Endothelial cell of umbilical vein (primary cell): ENCODE measurements at regions of chr15 and their contacts with region 1.

Region 1: DNA sequence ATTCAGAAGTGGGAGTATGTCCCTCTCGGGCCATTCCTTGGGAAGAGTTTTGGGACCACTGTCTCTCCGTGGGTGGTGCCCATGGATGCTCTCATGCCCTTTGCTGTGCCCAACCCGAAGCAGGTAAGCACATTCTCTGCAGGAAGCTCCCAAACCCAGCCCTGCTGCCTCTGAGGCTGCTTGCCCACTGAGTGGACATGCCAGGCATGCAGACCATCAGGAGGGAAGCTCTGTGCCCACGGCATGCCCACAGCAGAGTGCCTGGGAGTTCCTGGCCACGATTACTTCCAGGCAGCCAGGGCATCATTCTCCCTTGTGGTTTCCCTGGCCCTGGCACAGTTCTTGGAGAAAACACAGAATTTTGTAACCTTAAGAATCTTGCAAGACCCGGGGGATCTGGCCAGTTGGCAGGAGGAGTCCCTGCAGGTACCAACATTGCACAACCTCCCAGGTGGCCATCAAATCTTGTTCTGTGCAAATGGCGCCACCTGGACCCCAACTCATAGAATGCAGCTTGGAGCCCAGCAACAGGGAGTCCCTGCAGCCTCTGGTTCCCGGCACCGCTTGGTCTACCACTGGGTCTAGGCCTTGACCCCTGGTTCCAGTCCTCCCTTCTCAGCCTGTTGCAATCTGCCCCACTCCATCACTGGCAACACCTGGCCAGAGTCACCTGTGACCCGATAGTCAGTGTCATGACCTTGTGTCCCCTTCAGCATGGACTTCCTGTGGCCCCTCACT is 20.4 kb downstream of the FAH start:
- DNase-seq: peak; percentile 58
- H3K4me3 ChIP-seq: no peak overlapping the region
- H3K27ac ChIP-seq: no peak overlapping the region
- H3K4me1 ChIP-seq: peaks cover 3% of the 10 kb centered on the region
- H3K27me3 ChIP-seq: no peaks in the 10 kb centered on the region
- CTCF ChIP-seq: peak; percentile 75 to 82
- POLR2A ChIP-seq: no peak

Region 2: GRCh38 chr15:79339564-79340314 is 833.5 kb before region 1 on chr15:
- CTCF ChIA-PET with region 1: interaction called, 14 read pairs
- POLR2A ChIA-PET with region 1: no interaction called
- dilution Hi-C with region 1: no loop called
- intact Hi-C with region 1: no loop called
- DNase-seq: peak; percentile 69
- H3K4me3 ChIP-seq: no peak overlapping the region
- H3K27ac ChIP-seq: no peak overlapping the region
- H3K4me1 ChIP-seq: no peaks in the 10 kb centered on the region
- H3K27me3 ChIP-seq: no peaks in the 10 kb centered on the region
- CTCF ChIP-seq: peak; percentile 61 to 71
- POLR2A ChIP-seq: no peak

Region 3: DNA sequence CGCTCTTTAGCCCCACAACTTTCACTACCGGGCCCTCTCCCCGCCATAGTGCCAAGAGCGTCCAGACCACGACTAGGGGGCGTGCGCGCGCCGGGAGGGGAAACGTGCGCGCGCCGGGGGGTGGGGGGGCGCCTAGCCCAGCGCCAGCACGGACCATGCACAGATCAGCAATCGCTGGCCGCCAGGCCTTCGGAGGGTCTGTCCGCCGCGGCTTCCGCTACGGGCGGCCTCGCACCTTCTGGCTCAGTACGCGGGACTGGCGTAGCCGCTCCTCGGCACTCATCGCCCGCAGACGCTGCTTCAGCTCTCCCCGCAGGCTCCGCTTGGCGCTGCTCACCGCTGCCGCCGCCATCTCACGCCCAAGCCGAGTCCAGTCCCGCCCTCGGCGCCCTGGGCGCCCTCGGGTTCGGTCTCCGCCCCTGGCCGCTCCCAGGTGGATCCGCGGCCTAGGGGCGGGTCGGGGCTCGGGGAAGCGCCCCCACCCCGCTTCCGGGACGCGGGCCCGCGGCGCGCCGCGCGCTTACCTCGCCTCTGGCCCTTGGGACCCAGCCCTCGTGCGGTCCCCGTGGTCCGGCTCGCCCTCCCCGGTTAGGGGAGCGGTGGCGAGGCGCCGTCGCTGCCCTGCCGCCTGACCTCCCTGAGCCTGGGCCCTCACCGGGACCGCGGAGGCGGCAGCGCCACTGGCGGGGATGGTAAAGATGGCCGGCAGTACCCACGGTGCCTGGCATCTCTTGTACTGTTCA is 276.4 kb before region 1 on chr15 and contains the start of gene MTHFS:
- CTCF ChIA-PET with region 1: no interaction called
- POLR2A ChIA-PET with region 1: no interaction called
- dilution Hi-C with region 1: no loop called
- intact Hi-C with region 1: loop called (anchors 2 kb)
- DNase-seq: peak; percentile 73
- H3K4me3 ChIP-seq: peak within 1 kb of the TSS in 2 of 3 experiments; percentile 53 to 77
- H3K27ac ChIP-seq: peak within 1 kb of the TSS; percentile 46
- H3K4me1 ChIP-seq: peaks cover 8% of the 10 kb centered on the region
- H3K27me3 ChIP-seq: no peaks in the 10 kb centered on the region
- CTCF ChIP-seq: peak; percentile 42 to 65
- POLR2A ChIP-seq: peak; percentile 66
- total RNA-seq, gene MTHFS: 9.9 and 15.7 TPM in 2 replicates

Region 4: GRCh38 chr15:79989682-79990081 is 183.5 kb before region 1 on chr15:
- CTCF ChIA-PET with region 1: interaction called, 7 read pairs
- POLR2A ChIA-PET with region 1: no interaction called
- dilution Hi-C with region 1: no loop called
- intact Hi-C with region 1: loop called (anchors 1 kb)
- DNase-seq: no peak
- H3K4me3 ChIP-seq: no peak overlapping the region
- H3K27ac ChIP-seq: no peak overlapping the region
- H3K4me1 ChIP-seq: no peaks in the 10 kb centered on the region
- H3K27me3 ChIP-seq: peaks cover under 1 to 3% of the 10 kb centered on the region in 2 experiments
- CTCF ChIP-seq: no peak
- POLR2A ChIP-seq: no peak

Region 5: GRCh38 chr15:80058851-80059785 is 114.1 kb before region 1 on chr15 and contains the start of gene ZFAND6:
- CTCF ChIA-PET with region 1: interaction called, 9 read pairs
- POLR2A ChIA-PET with region 1: no interaction called
- dilution Hi-C with region 1: no loop called
- intact Hi-C with region 1: loop called (anchors 1 kb)
- DNase-seq: peak; percentile 93
- H3K4me3 ChIP-seq: peak within 1 kb of the TSS; percentile 54 to 90 (median 89)
- H3K27ac ChIP-seq: peak within 1 kb of the TSS; percentile 87
- H3K4me1 ChIP-seq: peaks cover 18% of the 10 kb centered on the region
- H3K27me3 ChIP-seq: peaks cover 8 to 16% of the 10 kb centered on the region in 2 experiments
- CTCF ChIP-seq: no peak
- POLR2A ChIP-seq: peak; percentile 59
- total RNA-seq, gene ZFAND6: 50.3 and 53.0 TPM in 2 replicates

Region 6: GRCh38 chr15:80093854-80094418 is 79.3 kb before region 1 on chr15:
- CTCF ChIA-PET with region 1: interaction called, 4 read pairs
- POLR2A ChIA-PET with region 1: no interaction called
- dilution Hi-C with region 1: no loop called
- intact Hi-C with region 1: loop called (anchors 5 kb)
- DNase-seq: peak; percentile 75
- H3K4me3 ChIP-seq: no peak overlapping the region
- H3K27ac ChIP-seq: no peak overlapping the region
- H3K4me1 ChIP-seq: no peaks in the 10 kb centered on the region
- H3K27me3 ChIP-seq: no peaks in the 10 kb centered on the region
- CTCF ChIP-seq: no peak
- POLR2A ChIP-seq: no peak

Region 7: GRCh38 chr15:80160570-80161156 is 12.5 kb before region 1 on chr15:
- CTCF ChIA-PET with region 1: interaction called, 31 read pairs
- POLR2A ChIA-PET with region 1: no interaction called
- dilution Hi-C with region 1: no loop called
- intact Hi-C with region 1: no loop called
- DNase-seq: peak; percentile 77
- H3K4me3 ChIP-seq: no peak overlapping the region
- H3K27ac ChIP-seq: peak overlapping the region; percentile 47
- H3K4me1 ChIP-seq: peaks cover 11% of the 10 kb centered on the region
- H3K27me3 ChIP-seq: no peaks in the 10 kb centered on the region
- CTCF ChIP-seq: no peak
- POLR2A ChIP-seq: no peak